Panc1 (cell line): ENCODE measurements at regions of chr17 and their contacts with region 1.

Region 1: GRCh38 chr17:58525181-58525601 is 10.8 kb upstream of the MTMR4 start:
- DNase-seq: no peak
- ATAC-seq: no peak
- H3K4me3 ChIP-seq: no peak overlapping the region
- H3K27ac ChIP-seq: no peak overlapping the region
- H3K4me1 ChIP-seq: no peaks in the 10 kb centered on the region
- H3K27me3 ChIP-seq: no peaks in the 10 kb centered on the region
- CTCF ChIP-seq: no peak

Region 2: DNA sequence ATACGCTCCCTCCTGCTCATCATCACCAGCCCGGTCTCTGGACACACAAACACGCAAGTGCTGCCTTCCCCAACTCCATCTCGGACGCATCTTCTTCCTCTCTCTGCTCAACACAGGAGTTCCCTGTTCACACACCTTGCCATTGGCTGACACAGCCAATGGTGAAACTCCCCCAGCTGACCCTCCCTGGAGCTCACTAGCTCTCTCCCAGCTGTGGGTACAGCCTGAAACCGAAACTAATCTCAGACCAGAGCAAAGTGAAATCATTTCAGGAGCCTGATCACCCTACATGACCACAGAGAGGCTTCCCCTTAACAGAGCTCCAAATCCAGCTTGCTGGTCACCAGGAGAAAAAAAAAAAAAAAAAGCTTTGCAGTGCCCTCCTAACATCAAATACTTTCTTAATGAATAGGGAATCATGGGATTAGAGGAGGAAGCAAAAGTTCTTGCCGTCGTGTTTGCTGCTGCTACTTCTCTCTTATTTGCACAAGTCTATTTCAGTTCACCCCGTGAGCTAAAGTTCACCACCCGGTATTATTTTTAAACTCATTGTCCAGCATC is 578.3 kb before region 1 on chr17:
- CTCF ChIA-PET with region 1: no interaction called
- POLR2A ChIA-PET with region 1: no interaction called
- in situ Hi-C with region 1: no loop called
- intact Hi-C with region 1: no loop called
- DNase-seq: no peak
- ATAC-seq: peak; percentile 62
- H3K4me3 ChIP-seq: peak overlapping the region; percentile 26 to 70
- H3K27ac ChIP-seq: peak overlapping the region; percentile 98
- H3K4me1 ChIP-seq: peaks cover 88% of the 10 kb centered on the region
- H3K27me3 ChIP-seq: no peaks in the 10 kb centered on the region
- CTCF ChIP-seq: no peak

Region 3: GRCh38 chr17:58476812-58477211 is 48.4 kb before region 1 on chr17:
- CTCF ChIA-PET with region 1: no interaction called
- POLR2A ChIA-PET with region 1: no interaction called
- in situ Hi-C with region 1: no loop called
- intact Hi-C with region 1: no loop called
- DNase-seq: no peak
- ATAC-seq: no peak
- H3K4me3 ChIP-seq: no peak overlapping the region
- H3K27ac ChIP-seq: no peak overlapping the region
- H3K4me1 ChIP-seq: no peaks in the 10 kb centered on the region
- H3K27me3 ChIP-seq: no peaks in the 10 kb centered on the region
- CTCF ChIP-seq: no peak

Region 4: GRCh38 chr17:58492238-58493121 is 32.7 kb before region 1 on chr17:
- CTCF ChIA-PET with region 1: no interaction called
- POLR2A ChIA-PET with region 1: interaction called, 10 read pairs
- in situ Hi-C with region 1: no loop called
- intact Hi-C with region 1: no loop called
- DNase-seq: no peak
- ATAC-seq: no peak
- H3K4me3 ChIP-seq: no peak overlapping the region
- H3K27ac ChIP-seq: no peak overlapping the region
- H3K4me1 ChIP-seq: no peaks in the 10 kb centered on the region
- H3K27me3 ChIP-seq: no peaks in the 10 kb centered on the region
- CTCF ChIP-seq: no peak

Region 5: DNA sequence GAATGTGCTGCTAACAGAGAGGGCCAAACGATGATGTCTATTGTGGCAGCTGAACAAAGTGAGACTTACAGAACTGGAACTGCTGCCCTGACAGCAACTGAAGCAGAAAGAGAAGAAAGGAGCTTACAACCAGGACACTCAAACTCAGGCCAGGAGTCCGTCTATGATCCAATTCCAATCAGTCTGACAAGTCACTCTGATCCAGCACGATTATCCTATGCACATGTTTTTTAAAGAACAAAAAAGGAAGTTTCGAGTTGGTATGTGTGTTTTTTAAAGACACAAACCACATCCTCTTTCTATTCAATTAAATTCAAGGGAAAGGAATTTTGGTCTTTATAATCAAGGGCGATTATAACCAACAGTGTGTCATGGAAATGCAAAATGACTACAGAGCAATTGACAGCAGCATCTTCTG is 31.7 kb after region 1 on chr17:
- CTCF ChIA-PET with region 1: no interaction called
- POLR2A ChIA-PET with region 1: no interaction called
- in situ Hi-C with region 1: no loop called
- intact Hi-C with region 1: no loop called
- DNase-seq: no peak
- ATAC-seq: no peak
- H3K4me3 ChIP-seq: no peak overlapping the region
- H3K27ac ChIP-seq: no peak overlapping the region
- H3K4me1 ChIP-seq: no peaks in the 10 kb centered on the region
- H3K27me3 ChIP-seq: no peaks in the 10 kb centered on the region; the same call in 1 of the 2 replicates
- CTCF ChIP-seq: no peak

Region 6: DNA sequence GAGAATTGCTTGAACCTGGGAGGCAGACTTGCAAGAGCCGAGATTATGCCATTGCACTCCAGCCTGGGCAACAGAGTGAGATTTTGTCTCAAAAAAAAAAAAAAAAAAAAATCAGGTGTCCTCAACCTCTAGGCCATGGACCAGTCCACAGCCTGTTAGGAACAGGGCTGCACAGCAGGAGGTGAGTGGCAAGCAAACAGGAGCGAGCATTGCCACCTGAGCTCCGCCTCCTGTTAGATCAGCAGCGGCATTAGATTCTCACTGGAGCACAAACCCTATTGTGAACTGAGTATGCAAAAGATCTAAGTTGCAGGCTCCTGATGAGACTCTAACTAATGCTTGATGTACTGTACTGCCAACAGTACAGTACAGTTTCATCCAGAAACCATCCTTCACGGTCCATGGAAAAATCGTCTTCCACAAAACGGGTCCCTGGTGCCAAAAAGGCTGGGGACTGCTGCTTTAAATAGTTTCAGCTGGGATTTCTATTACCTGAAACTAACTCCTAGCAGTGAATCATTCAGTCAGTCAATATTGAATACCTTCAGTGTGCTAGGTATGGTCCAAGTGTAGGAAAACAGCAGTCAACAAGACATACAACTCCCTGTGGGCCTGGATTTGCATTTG is 983.9 kb after region 1 on chr17:
- CTCF ChIA-PET with region 1: no interaction called
- POLR2A ChIA-PET with region 1: interaction called, 22 read pairs
- in situ Hi-C with region 1: no loop called
- intact Hi-C with region 1: no loop called
- DNase-seq: no peak
- ATAC-seq: no peak
- H3K4me3 ChIP-seq: no peak overlapping the region
- H3K27ac ChIP-seq: no peak overlapping the region
- H3K4me1 ChIP-seq: no peaks in the 10 kb centered on the region
- H3K27me3 ChIP-seq: no peaks in the 10 kb centered on the region
- CTCF ChIP-seq: no peak